ENCODE measurements at regions of chr5 and their contacts with region 1.

Region 1: GRCh38 chr5:100852988-100853449 is 50.1 kb downstream of the ST8SIA4 start:
- DNase-seq: no peak
- ATAC-seq: peak; percentile 85
- H3K4me3 Mint-ChIP-seq: peak overlapping the region; percentile 63
- H3K27ac Mint-ChIP-seq: peak overlapping the region; percentile 87
- H3K4me1 Mint-ChIP-seq: peaks cover 48% of the 10 kb centered on the region
- H3K27me3 Mint-ChIP-seq: no peaks in the 10 kb centered on the region

Region 2: DNA sequence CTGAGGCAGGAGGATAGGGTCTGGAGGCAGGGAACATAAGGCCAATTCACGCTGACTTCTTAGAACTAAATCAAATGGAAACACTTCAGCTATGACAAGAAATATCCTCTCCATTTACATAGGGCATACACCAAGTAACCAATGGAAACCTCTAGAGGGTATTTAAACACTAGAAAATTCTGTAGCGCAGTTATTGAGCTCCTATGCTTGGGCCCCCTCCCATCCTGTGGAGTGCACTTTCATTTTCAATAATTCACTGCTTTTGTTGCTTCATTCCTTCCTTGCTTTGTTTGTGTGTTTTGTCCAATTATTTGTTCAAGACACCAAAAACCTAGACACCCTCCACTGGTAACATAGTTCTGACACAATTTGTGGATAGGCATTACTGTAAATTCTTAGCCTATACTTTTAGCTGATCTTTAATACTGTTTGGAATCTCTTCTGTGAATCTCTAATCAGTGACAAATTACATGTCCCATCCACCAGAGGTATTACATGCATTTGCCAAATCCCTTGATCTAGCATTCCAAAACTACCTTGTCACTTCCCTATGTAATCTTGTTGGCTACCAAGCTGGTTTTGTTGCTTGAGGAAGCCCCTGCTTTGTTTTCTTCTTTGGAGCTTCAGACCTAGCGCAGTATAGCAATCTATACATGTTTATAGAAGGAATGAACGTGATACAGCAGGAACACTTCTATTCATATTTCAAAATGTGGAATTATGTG is 11.5 kb before region 1 on chr5:
- CTCF ChIA-PET with region 1: interaction called, 10 read pairs
- DNase-seq: peak; percentile 48
- ATAC-seq: peak; percentile 52
- H3K4me3 Mint-ChIP-seq: peak overlapping the region; percentile 69
- H3K27ac Mint-ChIP-seq: peak overlapping the region; percentile 94
- H3K4me1 Mint-ChIP-seq: peaks cover 69% of the 10 kb centered on the region
- H3K27me3 Mint-ChIP-seq: no peaks in the 10 kb centered on the region